SK-N-SH (cell line): ENCODE measurements at regions of chr17 and their contacts with region 1.

Region 1: DNA sequence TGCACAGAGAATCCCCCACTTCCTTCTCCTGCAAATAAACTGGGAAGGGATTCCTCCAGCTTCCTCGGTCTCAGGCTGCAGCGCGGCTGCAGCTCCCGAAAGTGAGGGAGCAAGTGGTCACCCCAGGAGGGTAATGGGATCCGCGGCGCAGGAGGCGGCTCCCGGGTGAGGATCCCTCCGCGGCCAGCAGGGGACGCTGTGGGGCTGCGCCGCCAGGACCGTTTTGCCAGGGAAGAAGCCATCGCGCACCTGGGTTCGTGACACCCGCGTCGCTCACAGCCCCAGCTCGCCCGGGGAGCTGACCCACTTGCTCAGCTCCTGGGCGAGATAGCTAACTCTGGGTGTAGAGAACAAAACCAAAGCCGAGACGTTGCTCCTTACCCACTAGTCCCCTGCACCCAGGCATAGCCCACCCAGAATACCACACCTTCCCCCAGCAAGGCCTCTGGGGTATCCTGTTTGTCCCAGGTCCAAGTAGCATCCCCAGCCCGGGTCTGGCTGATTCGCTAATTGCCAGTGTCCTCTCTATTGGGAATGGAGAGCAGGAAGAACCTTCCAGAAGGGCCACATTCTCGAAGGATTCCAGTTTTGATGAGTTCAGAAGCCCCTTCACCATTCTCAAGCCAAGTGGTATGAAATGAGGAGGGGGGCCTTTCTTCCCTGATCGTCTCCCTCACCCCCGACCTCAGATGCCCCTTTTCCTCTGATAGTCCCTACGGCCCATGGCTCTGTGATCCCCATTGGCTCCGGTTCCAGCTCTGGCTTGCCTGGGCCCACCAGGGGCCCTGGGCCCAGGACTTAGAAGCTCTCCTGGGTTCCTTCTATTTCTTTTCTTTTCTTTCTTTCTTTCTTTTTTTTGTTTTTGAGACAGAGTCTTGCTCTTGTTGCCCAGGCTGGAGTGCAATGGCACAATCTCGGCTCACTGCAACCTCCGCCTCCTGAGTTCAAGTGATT is 14.1 kb downstream of the CYGB start:
- DNase-seq: peak; percentile 95
- H3K4me3 ChIP-seq: peak overlapping the region in 1 of 2 experiments; percentile 38; a peak in 1 of 4 replicates
- H3K27ac ChIP-seq: no peak overlapping the region
- H3K4me1 ChIP-seq: peaks cover 0 to 26% of the 10 kb centered on the region in 2 experiments; a peak in 1 of 4 replicates
- H3K27me3 ChIP-seq: peaks cover 17% of the 10 kb centered on the region; the same call in 1 of the 2 replicates
- CTCF ChIP-seq: peak; percentile 100
- EP300 ChIP-seq: no peak
- RAD21 ChIP-seq: peak; percentile 99

Region 2: GRCh38 chr17:76072148-76072858 is 451.1 kb before region 1 on chr17 and contains the start of gene SRP68:
- CTCF ChIA-PET with region 1: no interaction called
- POLR2A ChIA-PET with region 1: no interaction called
- DNase-seq: peak; percentile 100
- H3K4me3 ChIP-seq: peak within 1 kb of the TSS; percentile 78 to 82
- H3K27ac ChIP-seq: peak within 1 kb of the TSS; percentile 41 to 63; a peak in 3 of 4 replicates
- H3K4me1 ChIP-seq: peaks cover 0 to 17% of the 10 kb centered on the region in 2 experiments; a peak in 3 of 4 replicates
- H3K27me3 ChIP-seq: peaks cover 39% of the 10 kb centered on the region
- CTCF ChIP-seq: no peak
- EP300 ChIP-seq: peak in 1 of 2 experiments; percentile 72; a peak in 1 of 4 replicates
- RAD21 ChIP-seq: 0 out of 2 replicates have a peak, but pooled peaks have one; percentile 8
- polyA plus RNA-seq, gene SRP68: 76.8 and 81.4 TPM in 2 replicates

Region 3: DNA sequence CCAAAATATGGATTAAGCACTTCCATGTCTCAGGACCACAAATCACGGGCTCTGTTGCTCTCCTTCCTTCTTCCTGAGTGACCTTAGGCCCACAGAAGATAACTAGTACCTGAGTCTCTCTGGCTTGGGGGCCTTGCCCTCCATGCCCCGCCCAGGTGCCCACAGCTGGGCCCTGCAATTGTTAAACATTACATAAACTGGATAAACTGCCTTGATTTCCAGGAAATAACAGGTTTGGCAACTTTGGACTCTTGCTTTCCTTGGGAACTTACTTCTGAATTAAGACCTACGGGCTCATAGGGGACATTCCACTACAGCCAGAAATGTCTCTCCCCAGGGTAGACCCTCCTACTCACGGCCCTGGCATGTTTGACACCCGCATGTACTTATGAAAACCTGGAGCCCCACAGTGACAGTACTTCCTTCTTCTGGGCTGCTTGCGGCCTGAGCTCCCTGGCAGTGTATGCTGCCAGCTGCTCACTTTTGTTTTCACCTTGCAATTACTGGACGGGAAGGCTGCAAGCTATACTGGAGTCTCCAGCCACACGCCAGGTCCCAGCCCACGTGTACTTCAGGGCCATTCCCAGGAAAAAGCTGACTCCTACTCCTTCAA is 260.5 kb before region 1 on chr17:
- CTCF ChIA-PET with region 1: no interaction called
- POLR2A ChIA-PET with region 1: no interaction called
- DNase-seq: no peak
- H3K4me3 ChIP-seq: no peak overlapping the region
- H3K27ac ChIP-seq: peak overlapping the region in 1 of 2 experiments; percentile 22; a peak in 1 of 4 replicates
- H3K4me1 ChIP-seq: peaks cover 11 to 14% of the 10 kb centered on the region in 2 experiments; a peak in 3 of 4 replicates
- H3K27me3 ChIP-seq: no peaks in the 10 kb centered on the region
- CTCF ChIP-seq: no peak
- EP300 ChIP-seq: no peak
- RAD21 ChIP-seq: no peak

Region 4: DNA sequence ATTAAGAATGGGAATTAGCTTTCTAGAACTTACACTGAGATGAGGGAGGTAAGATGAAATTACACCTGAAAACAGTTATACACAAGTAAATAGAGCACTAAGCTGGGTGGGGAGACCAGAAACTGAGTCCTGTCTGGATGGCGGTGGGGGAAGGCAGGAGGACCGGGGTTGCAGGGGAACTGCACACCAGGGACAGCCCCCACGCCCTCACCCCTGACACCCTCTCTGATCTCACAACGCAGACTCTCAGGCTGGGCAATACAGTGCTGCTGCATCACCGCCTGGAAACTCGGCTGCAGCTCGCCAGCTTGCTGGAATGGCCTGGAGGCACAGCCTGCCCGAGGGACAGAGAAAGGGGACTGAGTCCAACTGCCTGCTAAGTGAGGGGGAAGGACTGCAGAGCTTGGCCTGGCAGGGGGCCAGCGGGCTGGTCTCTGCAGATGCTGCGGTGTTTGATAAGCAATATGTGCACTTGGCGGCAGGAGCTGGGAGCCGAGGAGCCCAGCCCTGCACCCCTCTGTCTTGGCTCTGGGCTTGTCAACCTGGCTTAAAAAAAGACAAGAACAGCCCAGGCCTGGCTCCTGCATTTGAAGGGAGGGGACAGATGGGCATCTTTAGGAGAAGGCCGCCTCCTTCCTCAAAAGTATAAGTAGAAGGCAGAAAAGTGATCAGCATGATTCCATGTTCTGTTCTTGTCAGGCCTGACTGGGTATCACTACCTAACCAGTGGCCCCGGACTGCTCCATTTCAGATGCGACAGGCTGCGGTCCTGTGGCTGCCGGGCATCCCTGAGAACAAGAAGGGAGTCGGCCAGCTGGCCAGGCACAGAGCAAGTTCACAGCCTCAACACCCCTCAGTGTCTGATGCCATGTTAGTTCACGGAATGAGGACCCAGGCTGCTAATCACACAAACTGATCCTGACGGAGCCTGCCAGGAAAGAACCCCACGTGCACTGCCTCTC is 108.7 kb before region 1 on chr17:
- CTCF ChIA-PET with region 1: interaction called, 16 read pairs
- POLR2A ChIA-PET with region 1: no interaction called
- DNase-seq: peak; percentile 94
- H3K4me3 ChIP-seq: no peak overlapping the region
- H3K27ac ChIP-seq: peak overlapping the region in 1 of 2 experiments; percentile 77; a peak in 2 of 4 replicates
- H3K4me1 ChIP-seq: peaks cover 0 to 44% of the 10 kb centered on the region in 2 experiments; a peak in 2 of 4 replicates
- H3K27me3 ChIP-seq: no peaks in the 10 kb centered on the region
- CTCF ChIP-seq: no peak
- EP300 ChIP-seq: peak in 1 of 2 experiments; percentile 78; a peak in 1 of 4 replicates
- RAD21 ChIP-seq: peak; percentile 24; the same call in 1 of the 2 replicates

Region 5: DNA sequence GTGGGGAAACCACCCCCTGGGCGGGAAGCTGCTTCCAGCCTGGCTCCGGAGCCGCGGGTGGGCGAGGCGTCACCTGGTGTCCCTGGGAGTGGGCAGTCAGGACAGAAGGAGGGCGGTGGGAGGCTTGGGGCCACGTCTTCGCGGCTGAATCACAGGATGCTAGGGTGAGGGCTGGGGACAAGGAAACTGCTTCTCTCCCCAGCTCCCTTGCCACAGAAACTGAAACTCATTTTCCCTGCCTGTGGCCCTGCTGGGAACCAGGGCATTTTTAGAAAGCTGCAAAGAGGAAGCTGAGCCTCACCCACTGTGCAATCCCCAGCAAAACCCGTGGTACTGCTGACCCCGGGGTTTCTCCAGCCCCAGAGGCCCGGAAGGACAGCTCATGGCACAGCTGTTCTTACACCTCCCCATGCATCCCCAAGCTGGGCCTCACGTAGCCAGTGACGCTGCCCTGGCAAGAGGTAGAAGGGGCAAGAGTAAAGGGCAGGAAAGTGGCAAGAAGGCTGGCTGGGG is 30.3 kb before region 1 on chr17:
- CTCF ChIA-PET with region 1: interaction called, 69 read pairs
- POLR2A ChIA-PET with region 1: no interaction called
- DNase-seq: no peak
- H3K4me3 ChIP-seq: no peak overlapping the region
- H3K27ac ChIP-seq: no peak overlapping the region
- H3K4me1 ChIP-seq: peaks cover 13 to 55% of the 10 kb centered on the region in 2 experiments; a peak in 3 of 4 replicates
- H3K27me3 ChIP-seq: no peaks in the 10 kb centered on the region
- CTCF ChIP-seq: no peak
- EP300 ChIP-seq: no peak
- RAD21 ChIP-seq: no peak

Region 6: GRCh38 chr17:76547184-76547641 is 23.9 kb after region 1 on chr17:
- CTCF ChIA-PET with region 1: interaction called, 679 read pairs
- POLR2A ChIA-PET with region 1: interaction called, 245 read pairs
- DNase-seq: peak; percentile 83
- H3K4me3 ChIP-seq: peak overlapping the region in 1 of 2 experiments; percentile 11; a peak in 2 of 4 replicates
- H3K27ac ChIP-seq: peak overlapping the region; percentile 57 to 99
- H3K4me1 ChIP-seq: peaks cover 25 to 56% of the 10 kb centered on the region in 2 experiments
- H3K27me3 ChIP-seq: peaks cover 9% of the 10 kb centered on the region; the same call in 1 of the 2 replicates
- CTCF ChIP-seq: peak; percentile 92
- EP300 ChIP-seq: peak in 1 of 2 experiments; percentile 7; a peak in 1 of 4 replicates
- RAD21 ChIP-seq: peak; percentile 99

Region 7: GRCh38 chr17:76597728-76598474 is 74.5 kb after region 1 on chr17:
- CTCF ChIA-PET with region 1: interaction called, 19 read pairs
- POLR2A ChIA-PET with region 1: no interaction called
- DNase-seq: no peak
- H3K4me3 ChIP-seq: no peak overlapping the region
- H3K27ac ChIP-seq: no peak overlapping the region
- H3K4me1 ChIP-seq: peaks cover 0 to 6% of the 10 kb centered on the region in 2 experiments; a peak in 2 of 4 replicates
- H3K27me3 ChIP-seq: no peaks in the 10 kb centered on the region
- CTCF ChIP-seq: no peak
- EP300 ChIP-seq: no peak
- RAD21 ChIP-seq: no peak

Region 8: DNA sequence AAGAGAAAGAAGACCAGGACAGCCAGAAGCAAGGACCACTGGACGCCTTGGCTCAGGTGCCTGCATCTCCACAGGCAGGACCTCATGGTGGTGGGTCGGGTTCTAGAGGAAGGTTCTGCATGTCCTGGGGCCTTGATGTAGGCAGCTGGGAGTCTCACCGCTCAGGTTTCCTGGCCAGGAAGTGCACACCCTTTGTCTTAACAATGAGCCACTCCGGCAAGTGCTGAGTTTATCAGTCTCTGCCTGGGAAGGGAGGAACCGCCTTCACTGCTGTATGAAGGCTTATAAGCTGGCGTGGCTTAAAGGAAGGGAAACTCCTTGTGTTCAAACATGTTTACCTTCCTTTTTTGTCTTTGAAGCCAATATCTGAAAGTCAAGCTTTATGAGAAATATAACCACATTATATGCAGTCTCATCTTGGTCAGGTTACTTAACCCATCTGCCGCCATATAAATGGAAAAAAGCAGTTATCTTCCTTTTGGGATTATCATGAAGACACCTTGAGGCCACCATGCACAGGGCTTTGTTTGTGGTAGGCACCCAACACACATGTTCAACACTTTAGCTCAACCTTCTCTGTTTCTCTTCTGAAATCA is 120.3 kb after region 1 on chr17 and contains the start of gene ST6GALNAC1:
- CTCF ChIA-PET with region 1: interaction called, 13 read pairs
- POLR2A ChIA-PET with region 1: no interaction called
- DNase-seq: no peak
- H3K4me3 ChIP-seq: no peak within 1 kb of the TSS
- H3K27ac ChIP-seq: no peak within 1 kb of the TSS
- H3K4me1 ChIP-seq: peaks cover 0 to 14% of the 10 kb centered on the region in 2 experiments; a peak in 2 of 4 replicates
- H3K27me3 ChIP-seq: no peaks in the 10 kb centered on the region; the same call in 1 of the 2 replicates
- CTCF ChIP-seq: no peak
- EP300 ChIP-seq: no peak
- RAD21 ChIP-seq: no peak
- polyA plus RNA-seq, gene ST6GALNAC1: not detected in 2 replicates